OCI-LY7 (cell line): ENCODE measurements at regions of chr1 and their contacts with region 1.

Region 1: DNA sequence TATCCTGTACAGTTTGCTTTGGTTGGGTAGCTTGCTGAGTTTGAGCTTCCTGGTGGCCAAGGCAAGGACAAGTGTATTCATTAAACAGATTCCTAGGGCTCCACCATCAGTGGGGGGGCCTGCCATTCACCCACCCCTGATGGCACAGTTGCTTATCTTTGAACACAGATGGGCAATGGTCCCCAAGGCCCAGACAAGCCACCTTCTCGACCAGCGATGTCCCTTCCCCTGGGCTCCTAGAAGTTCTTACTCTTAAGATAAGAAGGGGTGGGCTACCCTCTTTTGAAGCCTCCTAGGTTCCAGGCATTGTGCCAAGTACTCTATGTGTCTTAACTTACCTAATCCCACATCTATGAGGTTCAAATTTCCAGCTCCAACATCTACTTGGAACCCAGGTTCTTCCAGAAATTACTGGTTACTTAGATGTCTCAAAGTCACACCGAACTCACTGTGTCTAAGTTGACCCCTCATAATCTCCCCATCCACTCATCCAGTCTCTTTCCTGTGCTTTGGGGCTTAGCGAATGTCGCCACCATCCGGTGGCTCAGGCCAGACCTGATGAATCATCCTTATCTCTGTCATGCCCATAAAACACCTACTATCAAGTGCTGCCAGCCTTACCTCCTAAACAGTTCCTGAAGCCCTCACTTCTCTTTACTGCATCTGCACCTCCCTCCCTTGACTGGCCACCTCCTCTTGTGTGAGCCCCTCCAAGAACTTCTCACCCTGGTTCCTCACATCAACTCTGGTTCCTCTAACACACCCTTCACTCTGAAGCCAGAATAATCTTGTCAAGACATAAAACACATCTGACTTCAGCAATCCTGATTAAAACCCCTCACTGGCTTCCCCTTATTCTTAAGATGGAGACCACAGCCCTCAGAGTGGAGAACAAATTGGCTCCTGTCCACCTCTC is 50.1 kb downstream of the KLHDC7A start:
- DNase-seq: peak; percentile 60
- H3K4me3 ChIP-seq: no peak overlapping the region
- H3K27ac ChIP-seq: no peak overlapping the region
- H3K4me1 ChIP-seq: peaks cover 46% of the 10 kb centered on the region
- CTCF ChIP-seq: peak; percentile 89

Region 2: DNA sequence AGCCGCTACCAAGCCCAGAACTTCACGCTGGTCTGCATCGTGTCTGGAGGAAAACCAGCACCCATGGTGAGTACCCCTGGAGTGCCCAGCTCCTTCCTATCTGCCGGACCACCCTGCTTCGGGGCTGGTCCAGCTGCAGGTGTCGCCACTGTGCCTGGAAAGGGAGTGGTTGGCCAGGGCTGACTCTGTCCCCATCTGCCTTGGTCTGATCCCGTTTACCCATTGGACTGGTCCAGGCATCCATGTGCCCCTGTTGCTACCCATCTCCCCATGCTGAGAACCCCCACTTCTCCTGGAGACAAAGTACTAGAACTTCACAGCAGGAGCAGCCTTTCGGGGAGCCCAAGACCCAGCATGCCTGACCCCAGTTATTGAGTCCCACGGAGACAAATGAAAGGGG is 168.7 kb before region 1 on chr1:
- CTCF ChIA-PET with region 1: no interaction called
- POLR2A ChIA-PET with region 1: no interaction called
- intact Hi-C with region 1: loop called (anchors 2 kb)
- DNase-seq: no peak
- H3K4me3 ChIP-seq: no peak overlapping the region
- H3K27ac ChIP-seq: no peak overlapping the region
- H3K4me1 ChIP-seq: no peaks in the 10 kb centered on the region
- CTCF ChIP-seq: no peak

Region 3: DNA sequence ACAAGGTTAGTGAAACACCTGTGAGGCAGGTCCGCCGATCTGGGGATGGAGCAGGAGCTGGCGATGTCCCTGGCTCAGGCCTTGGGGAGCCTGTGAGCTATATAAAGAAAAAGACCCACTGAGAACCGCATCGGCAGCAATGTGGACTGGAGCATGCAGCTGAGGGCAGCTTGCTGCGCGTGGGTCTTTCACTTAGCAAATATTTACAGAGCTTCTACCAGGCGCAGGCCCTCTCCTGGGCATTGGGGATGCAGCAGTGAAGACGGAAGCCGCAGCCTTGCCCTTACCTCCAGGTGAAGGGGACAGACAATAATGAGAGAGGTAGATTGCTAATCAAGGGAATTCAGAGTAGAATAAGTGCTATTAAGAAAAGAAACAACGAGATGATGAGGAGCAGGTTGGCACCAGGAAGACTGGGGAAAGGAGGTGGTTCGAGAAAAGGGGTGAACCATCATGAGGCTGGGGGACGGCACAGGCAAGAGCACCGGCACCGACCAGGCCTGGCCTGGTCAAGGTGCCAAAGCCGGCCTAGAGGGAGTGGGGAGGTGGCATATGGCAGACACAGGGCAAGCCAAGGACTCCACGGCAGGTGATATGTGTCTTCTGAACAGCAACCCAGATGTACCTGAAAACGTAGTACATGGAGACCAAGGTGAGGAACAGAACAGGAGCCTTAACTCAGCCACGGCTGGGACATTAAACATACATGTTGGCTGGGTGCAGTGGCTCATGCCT is 39.1 kb after region 1 on chr1:
- CTCF ChIA-PET with region 1: no interaction called
- POLR2A ChIA-PET with region 1: no interaction called
- intact Hi-C with region 1: loop called (anchors 5 kb)
- DNase-seq: no peak
- H3K4me3 ChIP-seq: no peak overlapping the region
- H3K27ac ChIP-seq: no peak overlapping the region
- H3K4me1 ChIP-seq: peaks cover 22% of the 10 kb centered on the region
- CTCF ChIP-seq: no peak

Region 4: GRCh38 chr1:18703041-18703641 is 172.3 kb after region 1 on chr1:
- CTCF ChIA-PET with region 1: no interaction called
- POLR2A ChIA-PET with region 1: no interaction called
- intact Hi-C with region 1: no loop called
- DNase-seq: no peak
- H3K4me3 ChIP-seq: no peak overlapping the region
- H3K27ac ChIP-seq: no peak overlapping the region
- H3K4me1 ChIP-seq: no peaks in the 10 kb centered on the region
- CTCF ChIP-seq: no peak